ENCODE measurements at regions of chr7 and their contacts with region 1.

Region 1: DNA sequence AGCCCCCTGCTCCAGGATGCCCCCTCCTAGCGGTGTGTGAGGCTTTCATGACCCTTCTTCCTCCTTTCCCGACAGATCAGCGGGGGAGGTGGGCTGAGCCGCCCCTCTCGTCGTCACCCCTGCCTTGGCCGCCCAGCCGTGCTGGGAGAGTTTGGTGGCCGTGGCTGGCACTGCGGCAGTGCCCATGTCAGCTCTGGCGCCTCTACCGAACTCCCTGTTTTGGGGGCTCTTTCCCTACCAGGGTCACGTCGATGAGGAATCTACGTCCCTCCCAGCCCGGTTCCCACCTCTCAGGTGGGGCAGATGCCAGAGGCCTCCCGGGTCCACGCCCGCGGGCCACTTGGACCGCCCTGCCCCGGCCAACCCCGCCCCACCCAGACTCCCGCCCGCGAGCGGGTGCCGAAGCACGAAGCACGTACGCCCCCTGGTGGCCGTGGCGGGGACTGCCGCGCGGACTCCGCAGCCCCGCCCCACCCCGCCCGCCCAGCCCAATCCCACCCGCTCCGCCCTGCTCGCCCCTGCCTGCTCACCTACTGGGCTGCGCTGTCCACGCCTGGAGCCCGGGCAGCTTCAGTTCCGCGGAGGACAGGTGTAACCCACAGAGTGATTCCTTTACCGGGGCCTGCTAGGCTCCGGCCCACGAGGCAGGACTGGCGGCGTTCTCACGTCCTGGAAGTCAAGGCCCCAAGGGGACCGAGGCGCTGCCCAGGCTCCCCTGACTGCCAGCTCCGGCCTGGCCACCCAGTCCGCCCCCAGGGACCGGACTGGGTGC is 127.1 kb downstream of the UBE2H start:
- DNase-seq: peak; percentile 55
- ATAC-seq: peak; percentile 74
- H3K4me3 ChIP-seq: peak overlapping the region; percentile 74 to 80 (median 76)
- H3K27ac ChIP-seq: no peak overlapping the region
- H3K4me1 ChIP-seq: peaks cover 23% of the 10 kb centered on the region
- H3K27me3 ChIP-seq: no peaks in the 10 kb centered on the region; a peak in 1 of 5 replicates
- CTCF ChIP-seq: peak; percentile 75
- EP300 ChIP-seq: no peak; a peak in 1 of 4 replicates
- POLR2A ChIP-seq: no peak
- RAD21 ChIP-seq: peak; percentile 74

Region 2: GRCh38 chr7:129664029-129665012 is 161.4 kb before region 1 on chr7:
- CTCF ChIA-PET with region 1: interaction called, 20 read pairs
- POLR2A ChIA-PET with region 1: no interaction called
- in situ Hi-C with region 1: loop called (anchors 5 kb)
- intact Hi-C with region 1: loop called (anchors 1 kb)
- DNase-seq: peak; percentile 42
- ATAC-seq: no peak; the same call in 2 of the 3 replicates
- H3K4me3 ChIP-seq: no peak overlapping the region
- H3K27ac ChIP-seq: no peak overlapping the region
- H3K4me1 ChIP-seq: no peaks in the 10 kb centered on the region
- H3K27me3 ChIP-seq: no peaks in the 10 kb centered on the region
- CTCF ChIP-seq: peak; percentile 65
- EP300 ChIP-seq: no peak
- POLR2A ChIP-seq: no peak
- RAD21 ChIP-seq: peak; percentile 58; the same call in 1 of the 2 replicates

Region 3: GRCh38 chr7:129780257-129780973 is 45.3 kb before region 1 on chr7:
- CTCF ChIA-PET with region 1: no interaction called
- POLR2A ChIA-PET with region 1: interaction called, 3 read pairs
- in situ Hi-C with region 1: no loop called
- intact Hi-C with region 1: loop called (anchors 2 kb)
- DNase-seq: peak; percentile 72
- ATAC-seq: peak; percentile 82
- H3K4me3 ChIP-seq: peak overlapping the region; percentile 75 to 83 (median 82)
- H3K27ac ChIP-seq: no peak overlapping the region
- H3K4me1 ChIP-seq: peaks cover 17% of the 10 kb centered on the region
- H3K27me3 ChIP-seq: peaks cover 10 to 41% of the 10 kb centered on the region in 2 experiments
- CTCF ChIP-seq: no peak
- EP300 ChIP-seq: no peak
- POLR2A ChIP-seq: no peak
- RAD21 ChIP-seq: no peak

Region 4: GRCh38 chr7:129801882-129802473 is 23.7 kb before region 1 on chr7:
- CTCF ChIA-PET with region 1: no interaction called
- POLR2A ChIA-PET with region 1: no interaction called
- in situ Hi-C with region 1: no loop called
- intact Hi-C with region 1: no loop called
- DNase-seq: no peak
- ATAC-seq: no peak
- H3K4me3 ChIP-seq: no peak overlapping the region
- H3K27ac ChIP-seq: no peak overlapping the region
- H3K4me1 ChIP-seq: no peaks in the 10 kb centered on the region
- H3K27me3 ChIP-seq: peaks cover 5 to 33% of the 10 kb centered on the region in 2 experiments; a peak in 3 of 5 replicates
- CTCF ChIP-seq: no peak
- EP300 ChIP-seq: no peak
- POLR2A ChIP-seq: no peak
- RAD21 ChIP-seq: no peak

Region 5: GRCh38 chr7:129952653-129953560 is 127.2 kb after region 1 on chr7 and contains the start of gene UBE2H:
- CTCF ChIA-PET with region 1: no interaction called
- POLR2A ChIA-PET with region 1: no interaction called
- in situ Hi-C with region 1: no loop called
- intact Hi-C with region 1: loop called (anchors 5 kb)
- DNase-seq: peak; percentile 70
- ATAC-seq: peak; percentile 56
- H3K4me3 ChIP-seq: peak within 1 kb of the TSS; percentile 86 to 94 (median 87)
- H3K27ac ChIP-seq: peak within 1 kb of the TSS; percentile 92
- H3K4me1 ChIP-seq: peaks cover 25% of the 10 kb centered on the region
- H3K27me3 ChIP-seq: no peaks in the 10 kb centered on the region; a peak in 1 of 5 replicates
- CTCF ChIP-seq: no peak
- EP300 ChIP-seq: 0 out of 4 replicates have a peak, but pooled peaks of 1 of the 2 experiments have one; percentile 45
- POLR2A ChIP-seq: peak; percentile 74 to 75
- RAD21 ChIP-seq: 0 out of 2 replicates have a peak, but pooled peaks have one; percentile 39
- total RNA-seq, gene UBE2H: 15.5 and 18.7 TPM in 2 replicates

Region 6: GRCh38 chr7:130010689-130011412 is 185.2 kb after region 1 on chr7:
- CTCF ChIA-PET with region 1: interaction called, 12 read pairs
- POLR2A ChIA-PET with region 1: interaction called, 13 read pairs
- in situ Hi-C with region 1: loop called (anchors 5 kb)
- intact Hi-C with region 1: loop called (anchors 1 kb)
- DNase-seq: peak; percentile 78
- ATAC-seq: peak; percentile 48
- H3K4me3 ChIP-seq: peak overlapping the region in 2 of 3 experiments; percentile 29 to 51; a peak in 3 of 6 replicates
- H3K27ac ChIP-seq: no peak overlapping the region
- H3K4me1 ChIP-seq: peaks cover 40% of the 10 kb centered on the region
- H3K27me3 ChIP-seq: peaks cover 0 to 6% of the 10 kb centered on the region in 2 experiments; a peak in 1 of 5 replicates
- CTCF ChIP-seq: peak; percentile 87
- EP300 ChIP-seq: no peak
- POLR2A ChIP-seq: no peak
- RAD21 ChIP-seq: peak; percentile 77

Measured in HepG2 (cell line).